Activated CD4-positive, alpha-beta memory T cell treated with anti-CD3 and anti-CD28 coated beads, Interleukin-2, amount 10 ng/mL, durations not matched to agents 7 days and 5 days (primary cell): ENCODE measurements at regions of chrX and their contacts with region 1.

Region 1: GRCh38 chrX:40175511-40176350 is 78.0 kb upstream of the BCOR start:
- DNase-seq: peak; percentile 81
- H3K4me3 Mint-ChIP-seq: peak overlapping the region; percentile 83
- H3K27ac Mint-ChIP-seq: peak overlapping the region; percentile 97
- H3K4me1 Mint-ChIP-seq: peaks cover 33% of the 10 kb centered on the region
- H3K27me3 Mint-ChIP-seq: no peaks in the 10 kb centered on the region

Region 2: GRCh38 chrX:40117715-40118285 is 57.9 kb before region 1 on chrX:
- CTCF ChIA-PET with region 1: no interaction called
- POLR2A ChIA-PET with region 1: no interaction called
- DNase-seq: no peak
- H3K4me3 Mint-ChIP-seq: no peak overlapping the region
- H3K27ac Mint-ChIP-seq: no peak overlapping the region
- H3K4me1 Mint-ChIP-seq: peaks cover 8% of the 10 kb centered on the region
- H3K27me3 Mint-ChIP-seq: no peaks in the 10 kb centered on the region

Region 3: DNA sequence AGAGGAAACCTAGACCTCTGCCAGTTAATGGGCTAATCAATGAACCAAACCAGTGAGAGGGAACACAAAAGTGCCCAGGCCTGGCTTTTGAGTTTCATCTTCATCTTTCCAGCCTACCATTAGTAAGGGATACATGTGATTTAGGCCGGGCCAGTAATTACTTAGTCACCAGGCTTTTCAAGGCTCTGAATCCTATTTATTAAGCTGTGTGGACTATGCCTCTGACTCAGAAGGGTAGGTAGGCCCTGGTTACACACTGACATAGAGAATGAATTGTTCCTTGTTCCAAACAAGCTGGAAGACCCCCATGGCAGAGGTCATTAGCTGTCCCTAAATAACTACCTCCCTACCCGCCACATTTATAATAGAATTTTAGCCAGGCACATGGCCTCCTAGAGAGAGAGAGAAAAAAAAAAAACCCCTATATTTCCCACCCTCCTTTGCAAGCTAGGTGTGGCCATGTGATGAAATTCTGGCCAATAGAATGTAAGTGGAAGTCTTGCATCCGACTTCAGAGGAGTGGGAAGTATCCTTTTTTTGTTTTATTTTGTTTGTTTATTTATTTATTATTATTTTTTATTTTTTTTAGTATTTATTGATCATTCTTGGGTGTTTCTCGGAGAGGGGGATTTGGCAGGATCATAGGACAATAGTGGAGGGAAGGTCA is 34.4 kb after region 1 on chrX:
- CTCF ChIA-PET with region 1: no interaction called
- POLR2A ChIA-PET with region 1: no interaction called
- DNase-seq: no peak
- H3K4me3 Mint-ChIP-seq: no peak overlapping the region
- H3K27ac Mint-ChIP-seq: no peak overlapping the region
- H3K4me1 Mint-ChIP-seq: peaks cover 13% of the 10 kb centered on the region
- H3K27me3 Mint-ChIP-seq: no peaks in the 10 kb centered on the region

Region 4: DNA sequence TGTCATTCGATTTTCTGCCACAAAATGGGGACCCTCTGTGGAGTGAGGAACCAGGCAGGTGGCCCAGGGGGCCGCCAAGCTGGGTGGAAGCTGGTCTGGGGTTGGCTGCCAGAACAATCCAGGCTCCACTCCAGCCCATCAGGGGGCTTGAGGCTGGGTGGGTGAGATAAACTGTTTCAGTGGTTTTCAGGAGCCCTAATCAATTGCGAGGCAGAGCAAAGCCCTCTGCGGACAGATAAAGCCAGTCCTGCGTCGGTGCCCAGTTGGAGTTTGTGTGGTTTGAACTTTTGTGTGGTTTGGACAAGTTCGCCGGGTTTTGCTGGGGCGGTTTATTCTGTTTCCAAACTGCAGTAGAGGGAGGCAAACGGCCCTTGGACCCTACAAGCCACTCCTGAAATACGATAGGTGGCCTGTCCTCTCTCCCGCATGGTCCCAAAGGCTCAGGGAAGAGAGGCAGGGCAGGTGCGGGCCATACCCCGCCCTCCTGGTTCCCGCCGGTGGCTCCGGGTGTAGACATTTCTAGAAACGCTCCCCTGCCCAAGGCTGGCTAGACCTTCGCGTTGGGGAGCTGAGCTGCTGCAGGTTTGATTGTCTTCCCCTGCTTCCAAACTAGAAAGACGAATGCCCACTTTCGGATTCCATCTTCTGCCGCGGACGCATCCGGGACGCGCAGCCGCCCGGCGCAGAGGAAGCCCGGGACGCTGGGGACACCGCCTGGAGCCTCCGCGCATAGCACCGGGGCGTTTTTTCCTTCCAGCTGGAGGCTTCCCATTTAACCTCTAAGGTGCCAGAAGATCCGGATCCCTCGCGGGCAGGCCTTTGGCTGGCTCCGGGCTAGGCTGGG is 91.0 kb after region 1 on chrX:
- CTCF ChIA-PET with region 1: no interaction called
- POLR2A ChIA-PET with region 1: interaction called, 13 read pairs
- DNase-seq: peak; percentile 61
- H3K4me3 Mint-ChIP-seq: peak overlapping the region; percentile 66
- H3K27ac Mint-ChIP-seq: no peak overlapping the region
- H3K4me1 Mint-ChIP-seq: peaks cover 2% of the 10 kb centered on the region
- H3K27me3 Mint-ChIP-seq: no peaks in the 10 kb centered on the region

Region 5: GRCh38 chrX:40406330-40406859 is 230.7 kb after region 1 on chrX:
- CTCF ChIA-PET with region 1: no interaction called
- POLR2A ChIA-PET with region 1: no interaction called
- DNase-seq: no peak
- H3K4me3 Mint-ChIP-seq: no peak overlapping the region
- H3K27ac Mint-ChIP-seq: no peak overlapping the region
- H3K4me1 Mint-ChIP-seq: no peaks in the 10 kb centered on the region
- H3K27me3 Mint-ChIP-seq: peaks cover 6% of the 10 kb centered on the region